ENCODE measurements at regions of chr5 and their contacts with region 1.

Region 1: GRCh38 chr5:147223948-147224791 is 10.7 kb upstream of the STK32A start:
- DNase-seq: no peak
- H3K4me3 ChIP-seq: no peak overlapping the region
- H3K27ac ChIP-seq: no peak overlapping the region
- H3K4me1 ChIP-seq: no peaks in the 10 kb centered on the region
- H3K27me3 ChIP-seq: no peaks in the 10 kb centered on the region
- CTCF ChIP-seq: peak in 7 of 11 experiments; percentile 24 to 53 (median 45)
- POLR2A ChIP-seq: no peak

Region 2: DNA sequence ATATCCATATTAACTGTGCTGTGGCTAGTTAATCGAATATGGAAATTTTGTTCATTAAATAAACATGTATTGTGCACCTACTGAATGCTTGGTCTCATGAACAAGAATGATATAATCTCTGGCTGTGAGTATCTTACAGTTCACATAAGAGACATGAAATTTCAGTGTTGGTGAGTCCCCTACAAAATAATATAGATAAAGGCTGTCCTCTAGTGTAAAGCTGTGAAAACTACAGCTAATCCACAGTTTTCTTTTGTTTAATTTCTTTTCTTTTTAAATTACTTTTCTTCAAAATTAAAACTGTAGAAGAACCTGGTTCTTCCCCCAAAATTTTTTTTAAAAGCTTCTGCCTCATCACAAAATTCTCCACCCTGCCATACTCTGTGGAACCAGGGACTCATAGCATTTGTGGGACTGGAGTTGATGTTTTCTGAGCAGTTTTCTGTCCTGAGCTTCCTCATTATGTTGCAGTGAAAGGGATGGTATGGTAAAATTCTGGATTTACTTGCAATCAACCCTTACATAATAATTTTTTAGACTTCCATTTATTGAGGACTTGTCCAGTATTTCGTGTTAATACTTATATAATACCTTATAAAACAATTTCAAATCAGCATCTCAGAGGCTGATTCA is 145.7 kb after region 1 on chr5:
- intact Hi-C with region 1: loop called (anchors 10 kb)
- DNase-seq: no peak
- H3K4me3 ChIP-seq: no peak overlapping the region
- H3K27ac ChIP-seq: no peak overlapping the region
- H3K4me1 ChIP-seq: no peaks in the 10 kb centered on the region
- H3K27me3 ChIP-seq: no peaks in the 10 kb centered on the region
- CTCF ChIP-seq: peak in 3 of 11 experiments; percentile 17 to 33 (median 33)
- POLR2A ChIP-seq: no peak

Region 3: GRCh38 chr5:147576646-147577535 is 352.7 kb after region 1 on chr5:
- intact Hi-C with region 1: loop called (anchors 10 kb)
- DNase-seq: no peak
- H3K4me3 ChIP-seq: no peak overlapping the region
- H3K27ac ChIP-seq: no peak overlapping the region
- H3K4me1 ChIP-seq: no peaks in the 10 kb centered on the region
- H3K27me3 ChIP-seq: peaks cover 0 to 10% (median 0%) of the 10 kb centered on the region in 7 donors
- CTCF ChIP-seq: peak in 10 of 11 experiments; percentile 32 to 79 (median 66)
- POLR2A ChIP-seq: no peak